RWPE1 (cell line): ENCODE measurements at regions of chr10 and their contacts with region 1.

Region 1: DNA sequence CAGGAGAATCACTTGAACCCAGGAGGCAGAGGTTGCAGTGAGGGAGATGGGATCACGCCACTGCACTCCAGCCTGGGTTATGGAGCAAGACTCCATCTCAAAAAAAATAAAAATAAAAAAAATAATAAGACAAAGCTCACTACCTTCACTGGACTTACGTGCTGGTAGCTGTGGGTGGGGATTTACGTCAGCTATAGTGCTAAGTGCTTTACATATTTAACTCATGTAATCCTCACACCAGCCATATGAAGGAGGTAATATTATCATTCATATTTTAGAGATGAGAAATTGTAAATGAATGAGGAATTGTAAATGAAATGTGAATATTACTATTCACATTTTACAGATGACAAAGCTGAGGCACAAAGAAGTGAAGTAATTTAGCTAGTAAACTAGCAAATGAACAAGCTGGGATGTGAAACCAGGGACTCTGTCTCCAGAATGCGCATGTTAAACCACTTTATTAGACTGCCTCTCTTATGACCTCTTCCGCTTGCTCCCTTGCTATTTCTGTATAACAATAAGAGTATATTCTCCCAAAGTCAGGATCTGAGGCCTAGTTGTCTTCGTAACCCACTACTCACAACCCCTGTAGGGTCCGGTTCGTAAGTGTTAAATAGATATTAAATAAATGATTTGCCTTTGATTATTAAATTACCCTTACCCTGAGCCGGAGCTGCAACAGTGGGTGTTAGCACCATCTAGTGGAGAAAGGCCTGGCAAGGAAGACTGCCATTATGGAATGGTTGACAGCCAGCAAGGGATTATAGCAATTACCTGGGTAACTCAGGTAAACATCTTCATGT is 70.2 kb downstream of the HTR7 start:
- DNase-seq: peak; percentile 48
- H3K27ac ChIP-seq: no peak overlapping the region
- CTCF ChIP-seq: peak; percentile 76

Region 2: DNA sequence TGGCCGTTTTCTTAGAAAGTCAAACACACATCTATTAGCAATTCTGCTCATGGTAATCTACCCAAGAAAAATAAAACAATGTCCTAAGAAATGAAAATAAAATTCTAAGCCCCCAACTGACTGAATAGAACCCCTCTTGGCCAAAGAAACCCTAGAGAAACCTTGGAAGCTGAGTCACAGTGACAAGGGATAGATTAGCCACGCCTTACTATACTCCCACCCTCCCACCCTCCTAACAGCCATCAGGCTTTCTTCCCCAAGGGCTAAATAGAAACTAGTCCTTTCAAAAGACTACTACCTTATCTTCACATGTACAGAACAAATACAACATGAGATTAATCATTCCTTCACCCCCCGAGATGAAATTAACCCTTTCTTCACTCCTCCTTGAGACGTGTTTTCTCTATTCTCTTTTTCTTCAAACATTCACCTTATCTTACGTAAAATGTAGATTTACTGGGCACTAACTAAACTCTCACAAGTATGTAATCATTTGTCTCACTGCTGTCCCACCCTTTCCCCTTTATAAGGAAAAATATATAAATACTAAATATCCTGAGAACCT is 12.7 kb after region 1 on chr10:
- CTCF ChIA-PET with region 1: interaction called, 12 read pairs
- POLR2A ChIA-PET with region 1: no interaction called
- DNase-seq: no peak
- H3K27ac ChIP-seq: no peak overlapping the region
- CTCF ChIP-seq: no peak

Region 3: DNA sequence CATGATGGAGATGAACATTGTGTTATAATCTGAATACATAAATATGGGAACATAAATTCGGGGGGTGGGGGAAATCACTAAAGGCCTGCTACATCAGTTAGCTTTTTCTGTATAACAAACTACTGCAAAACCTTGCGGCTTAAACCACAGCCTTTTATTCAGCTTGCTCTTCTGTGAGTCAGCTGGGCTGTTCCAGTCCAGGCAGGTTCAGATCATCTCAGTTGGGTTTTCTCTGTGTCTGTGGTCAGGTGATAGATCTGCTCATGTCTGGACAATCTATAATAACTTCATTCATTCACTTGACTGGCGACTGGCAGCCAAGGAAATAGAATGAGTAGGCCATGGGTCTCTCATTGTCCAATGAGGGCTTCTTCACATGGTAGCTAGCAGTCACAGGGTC is 46.7 kb after region 1 on chr10:
- CTCF ChIA-PET with region 1: interaction called, 10 read pairs
- POLR2A ChIA-PET with region 1: no interaction called
- DNase-seq: peak; percentile 69
- H3K27ac ChIP-seq: no peak overlapping the region
- CTCF ChIP-seq: no peak